B cell (primary cell): ENCODE measurements at regions of chr1 and their contacts with region 1.

Region 1: GRCh38 chr1:32351399-32352238 is 10.7 kb downstream of the FAM229A start:
- DNase-seq: peak; percentile 95
- ATAC-seq: peak; percentile 96
- H3K4me3 ChIP-seq: peak overlapping the region; percentile 40 to 75 (median 63)
- H3K4me3 Mint-ChIP-seq: peak overlapping the region; percentile 88
- H3K27ac ChIP-seq: peak overlapping the region; percentile 54 to 91
- H3K27ac Mint-ChIP-seq: peak overlapping the region; percentile 88
- H3K4me1 ChIP-seq: peaks cover 14 to 27% of the 10 kb centered on the region in 2 donors
- H3K4me1 Mint-ChIP-seq: peaks cover 22% of the 10 kb centered on the region
- H3K27me3 ChIP-seq: no peaks in the 10 kb centered on the region
- H3K27me3 Mint-ChIP-seq: no peaks in the 10 kb centered on the region
- CTCF ChIP-seq: no peak

Region 2: GRCh38 chr1:32179443-32180185 is 172.0 kb before region 1 on chr1 and contains the start of gene TXLNA:
- CTCF ChIA-PET with region 1: interaction called, 3 read pairs
- POLR2A ChIA-PET with region 1: no interaction called
- intact Hi-C with region 1: loop called (anchors 1 kb)
- DNase-seq: peak; percentile 94
- ATAC-seq: peak; percentile 90
- H3K4me3 ChIP-seq: peak within 1 kb of the TSS; percentile 71 to 92 (median 76)
- H3K4me3 Mint-ChIP-seq: peak within 1 kb of the TSS; percentile 96
- H3K27ac ChIP-seq: peak within 1 kb of the TSS; percentile 76 to 90
- H3K27ac Mint-ChIP-seq: peak within 1 kb of the TSS; percentile 99
- H3K4me1 ChIP-seq: peaks cover 21 to 31% of the 10 kb centered on the region in 2 donors
- H3K4me1 Mint-ChIP-seq: peaks cover 35% of the 10 kb centered on the region
- H3K27me3 ChIP-seq: no peaks in the 10 kb centered on the region
- H3K27me3 Mint-ChIP-seq: no peaks in the 10 kb centered on the region
- CTCF ChIP-seq: no peak
- total RNA-seq, gene TXLNA: 38.3 and 38.4 TPM in 2 replicates

Region 3: GRCh38 chr1:32291708-32292492 is 59.7 kb before region 1 on chr1 and contains the start of gene HDAC1:
- CTCF ChIA-PET with region 1: interaction called, 5 read pairs
- POLR2A ChIA-PET with region 1: interaction called, 4 read pairs
- intact Hi-C with region 1: loop called (anchors 1 kb)
- DNase-seq: peak; percentile 96
- ATAC-seq: peak; percentile 98
- H3K4me3 ChIP-seq: peak within 1 kb of the TSS; percentile 77 to 98 (median 88)
- H3K4me3 Mint-ChIP-seq: peak within 1 kb of the TSS; percentile 100
- H3K27ac ChIP-seq: peak within 1 kb of the TSS; percentile 81 to 87
- H3K27ac Mint-ChIP-seq: peak within 1 kb of the TSS; percentile 99
- H3K4me1 ChIP-seq: peaks cover 41 to 42% of the 10 kb centered on the region in 2 donors
- H3K4me1 Mint-ChIP-seq: peaks cover 39% of the 10 kb centered on the region
- H3K27me3 ChIP-seq: no peaks in the 10 kb centered on the region
- H3K27me3 Mint-ChIP-seq: no peaks in the 10 kb centered on the region
- CTCF ChIP-seq: peak; percentile 1
- total RNA-seq, gene HDAC1: 200 and 205 TPM in 2 replicates

Region 4: DNA sequence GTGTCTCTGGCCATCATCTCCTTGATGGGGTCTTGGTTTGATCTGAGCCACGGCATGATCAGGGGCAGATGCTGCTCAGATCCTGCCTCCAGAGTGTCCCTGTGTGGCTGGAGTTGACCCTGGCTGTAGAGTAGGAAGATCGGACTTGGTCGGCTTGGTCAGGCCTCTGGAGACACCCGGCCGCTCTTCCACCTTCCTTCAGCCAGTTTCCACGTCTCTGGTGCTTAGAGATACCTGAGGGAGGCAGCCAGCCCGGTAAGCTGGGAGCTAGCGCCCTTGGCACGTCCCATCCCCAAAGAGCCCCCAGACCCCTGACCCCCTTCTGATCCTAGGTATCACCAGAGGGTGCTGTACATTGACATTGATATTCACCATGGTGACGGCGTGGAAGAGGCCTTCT is 24.4 kb before region 1 on chr1:
- CTCF ChIA-PET with region 1: no interaction called
- POLR2A ChIA-PET with region 1: no interaction called
- intact Hi-C with region 1: no loop called
- DNase-seq: no peak
- ATAC-seq: no peak
- H3K4me3 ChIP-seq: no peak overlapping the region
- H3K4me3 Mint-ChIP-seq: no peak overlapping the region
- H3K27ac ChIP-seq: no peak overlapping the region
- H3K27ac Mint-ChIP-seq: no peak overlapping the region
- H3K4me1 ChIP-seq: peaks cover 21 to 24% of the 10 kb centered on the region in 2 donors
- H3K4me1 Mint-ChIP-seq: peaks cover 24% of the 10 kb centered on the region
- H3K27me3 ChIP-seq: no peaks in the 10 kb centered on the region
- H3K27me3 Mint-ChIP-seq: no peaks in the 10 kb centered on the region
- CTCF ChIP-seq: no peak

Region 5: DNA sequence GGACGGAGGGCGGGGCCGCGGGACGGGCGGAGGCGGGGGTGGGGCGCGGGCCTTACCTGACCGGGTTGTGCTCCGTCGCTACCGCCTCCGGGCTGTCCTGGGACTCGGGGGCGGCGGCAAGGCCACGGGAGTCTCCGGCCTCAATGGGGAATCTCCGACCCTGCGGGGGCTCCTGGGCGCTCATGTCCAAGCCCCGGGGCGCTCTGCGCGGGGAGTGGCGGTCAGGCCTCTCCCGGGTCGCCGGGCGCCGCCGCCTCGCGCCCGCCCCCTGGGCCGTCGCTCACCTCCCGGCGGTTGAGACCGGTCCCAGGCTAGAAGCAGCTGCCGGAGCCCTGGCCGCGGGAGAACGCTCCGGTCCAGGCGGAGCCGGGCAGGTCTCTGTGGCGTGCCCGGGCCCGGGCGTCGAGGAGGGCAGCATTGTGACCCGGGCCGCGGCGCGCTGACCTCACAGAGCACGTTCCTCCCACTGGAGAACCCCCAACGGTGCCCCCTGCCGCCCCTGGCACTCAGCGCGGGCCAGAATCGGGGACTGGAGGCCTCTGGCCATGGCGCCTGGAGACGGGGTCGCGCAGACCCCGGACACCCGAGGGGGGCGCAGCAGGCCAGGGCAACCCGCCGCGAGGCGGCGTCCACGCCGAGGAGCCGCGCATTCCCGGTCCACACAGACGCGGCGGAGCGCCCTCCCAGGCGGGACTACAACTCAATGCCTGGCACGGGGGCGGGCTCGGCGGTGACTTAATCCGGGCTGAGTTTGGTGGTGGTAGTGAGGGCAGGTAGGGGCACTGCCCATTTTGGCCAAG is 10.3 kb after region 1 on chr1:
- CTCF ChIA-PET with region 1: interaction called, 6 read pairs
- POLR2A ChIA-PET with region 1: interaction called, 4 read pairs
- intact Hi-C with region 1: loop called (anchors 1 kb)
- DNase-seq: peak; percentile 65
- ATAC-seq: peak; percentile 46
- H3K4me3 ChIP-seq: peak overlapping the region in 3 of 5 experiments; percentile 51 to 54 (median 54)
- H3K4me3 Mint-ChIP-seq: peak overlapping the region; percentile 78
- H3K27ac ChIP-seq: no peak overlapping the region
- H3K27ac Mint-ChIP-seq: no peak overlapping the region
- H3K4me1 ChIP-seq: peaks cover 22 to 35% of the 10 kb centered on the region in 2 donors
- H3K4me1 Mint-ChIP-seq: peaks cover 29% of the 10 kb centered on the region
- H3K27me3 ChIP-seq: no peaks in the 10 kb centered on the region
- H3K27me3 Mint-ChIP-seq: no peaks in the 10 kb centered on the region
- CTCF ChIP-seq: no peak

Region 6: DNA sequence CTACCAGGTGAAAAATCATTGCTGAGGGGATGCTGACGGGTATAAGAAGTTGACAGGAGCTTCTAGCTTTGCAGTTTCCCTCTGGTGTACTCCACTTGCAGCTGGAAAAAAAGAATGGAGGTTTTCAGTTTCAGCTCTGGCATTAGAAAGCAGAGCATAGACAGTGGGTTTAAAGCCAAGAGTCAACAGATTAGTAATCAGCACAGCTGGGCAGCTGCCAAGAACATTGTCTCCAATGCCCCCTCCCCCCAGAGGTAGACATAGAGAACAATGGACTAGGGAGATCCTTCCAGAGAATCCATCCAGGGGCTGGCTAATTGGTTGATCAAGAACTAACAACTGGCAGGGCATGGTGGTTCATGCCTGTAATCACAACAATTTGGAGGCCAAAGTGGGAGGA is 103.1 kb after region 1 on chr1:
- CTCF ChIA-PET with region 1: no interaction called
- POLR2A ChIA-PET with region 1: no interaction called
- intact Hi-C with region 1: no loop called
- DNase-seq: no peak
- ATAC-seq: no peak
- H3K4me3 ChIP-seq: no peak overlapping the region
- H3K4me3 Mint-ChIP-seq: no peak overlapping the region
- H3K27ac ChIP-seq: no peak overlapping the region
- H3K27ac Mint-ChIP-seq: no peak overlapping the region
- H3K4me1 ChIP-seq: no peaks in the 10 kb centered on the region
- H3K4me1 Mint-ChIP-seq: no peaks in the 10 kb centered on the region
- H3K27me3 ChIP-seq: peaks cover 0 to 8% (median 2%) of the 10 kb centered on the region in 4 experiments
- H3K27me3 Mint-ChIP-seq: peaks cover 14% of the 10 kb centered on the region
- CTCF ChIP-seq: no peak